HepG2 (cell line): ENCODE measurements at regions of chr2 and their contacts with region 1.

Region 1: GRCh38 chr2:26846328-26847306 is 1.3 kb upstream of the DPYSL5 start:
- DNase-seq: peak; percentile 61
- ATAC-seq: peak; percentile 76
- H3K4me3 ChIP-seq: 0 out of 6 replicates have a peak overlapping the region, but pooled peaks of 2 of the 3 experiments have one; percentile 11 to 29
- H3K27ac ChIP-seq: no peak overlapping the region
- H3K4me1 ChIP-seq: peaks cover 13% of the 10 kb centered on the region
- H3K27me3 ChIP-seq: peaks cover 21 to 81% of the 10 kb centered on the region in 2 experiments
- CTCF ChIP-seq: peak; percentile 92
- EP300 ChIP-seq: no peak
- POLR2A ChIP-seq: no peak
- RAD21 ChIP-seq: peak; percentile 96

Region 2: GRCh38 chr2:26922405-26923188 is 76.0 kb after region 1 on chr2:
- CTCF ChIA-PET with region 1: interaction called, 14 read pairs
- POLR2A ChIA-PET with region 1: interaction called, 4 read pairs
- in situ Hi-C with region 1: no loop called
- intact Hi-C with region 1: loop called (anchors 1 kb)
- DNase-seq: peak; percentile 69
- ATAC-seq: peak; percentile 81
- H3K4me3 ChIP-seq: no peak overlapping the region; a peak in 1 of 6 replicates
- H3K27ac ChIP-seq: no peak overlapping the region
- H3K4me1 ChIP-seq: peaks cover 49% of the 10 kb centered on the region
- H3K27me3 ChIP-seq: peaks cover 0 to 26% of the 10 kb centered on the region in 2 experiments; a peak in 2 of 5 replicates
- CTCF ChIP-seq: peak; percentile 86
- EP300 ChIP-seq: no peak
- POLR2A ChIP-seq: no peak
- RAD21 ChIP-seq: peak; percentile 74